AG04450 (cell line): ENCODE measurements at regions of chr1 and their contacts with region 1.

Region 1: DNA sequence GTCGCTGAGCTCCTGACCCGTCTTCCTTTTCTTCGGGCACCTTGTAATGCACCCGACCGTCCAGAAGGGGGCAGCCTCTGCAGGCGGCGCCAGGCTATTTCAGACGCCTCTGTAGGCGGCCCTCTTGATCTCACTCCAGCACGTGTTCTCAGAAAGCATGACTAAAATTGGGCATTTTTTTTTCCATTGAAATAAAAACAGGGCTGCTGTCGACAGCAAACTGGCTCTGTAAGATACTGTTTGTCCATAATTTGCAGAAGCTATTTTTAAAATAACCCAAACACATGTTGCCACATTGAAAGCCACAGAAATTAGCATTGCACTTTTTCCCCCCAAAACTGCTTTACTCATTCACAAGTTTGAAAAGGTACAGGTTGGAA is 78.0 kb downstream of the STUM start:
- DNase-seq: no peak
- H3K4me3 ChIP-seq: no peak overlapping the region
- H3K27ac ChIP-seq: no peak overlapping the region
- H3K27me3 ChIP-seq: peaks cover 9% of the 10 kb centered on the region
- CTCF ChIP-seq: peak; percentile 92

Region 2: GRCh38 chr1:226157761-226158316 is 468.7 kb before region 1 on chr1:
- CTCF ChIA-PET with region 1: no interaction called
- POLR2A ChIA-PET with region 1: no interaction called
- DNase-seq: no peak
- H3K4me3 ChIP-seq: no peak overlapping the region
- H3K27ac ChIP-seq: no peak overlapping the region
- H3K27me3 ChIP-seq: no peaks in the 10 kb centered on the region
- CTCF ChIP-seq: no peak

Region 3: DNA sequence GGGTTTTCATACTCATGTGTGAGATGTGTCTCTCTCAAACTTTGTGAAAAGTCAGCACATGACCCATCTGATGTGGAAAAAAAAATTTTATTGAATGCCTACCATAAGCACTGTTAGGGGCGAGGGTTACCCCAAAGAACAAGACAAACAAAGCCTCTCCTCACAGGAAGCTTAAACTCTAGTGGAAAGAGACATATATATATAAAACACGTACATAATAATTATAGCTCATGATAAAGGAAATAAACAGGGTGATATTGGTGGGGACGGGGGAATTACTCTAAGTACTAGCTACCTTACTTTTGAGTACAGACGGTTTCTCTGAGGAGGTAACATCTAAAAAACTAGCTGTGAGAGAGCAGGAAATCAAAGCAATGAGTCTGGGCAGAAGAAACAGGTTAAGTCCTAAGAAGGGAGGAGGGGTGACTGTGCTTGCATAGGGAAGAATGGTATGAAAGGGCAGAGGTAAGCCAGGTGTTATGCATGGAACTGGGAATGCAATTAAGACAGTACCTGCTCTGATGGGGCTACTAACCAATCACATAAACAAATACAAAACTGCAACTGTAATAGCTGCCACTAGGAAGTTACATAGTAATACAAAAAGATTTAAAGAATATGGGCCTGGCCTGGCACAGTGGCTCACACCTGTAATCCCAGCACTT is 322.1 kb before region 1 on chr1:
- CTCF ChIA-PET with region 1: no interaction called
- POLR2A ChIA-PET with region 1: no interaction called
- DNase-seq: no peak
- H3K4me3 ChIP-seq: no peak overlapping the region
- H3K27ac ChIP-seq: no peak overlapping the region
- H3K27me3 ChIP-seq: no peaks in the 10 kb centered on the region
- CTCF ChIP-seq: no peak

Region 4: GRCh38 chr1:226547754-226548191 is 78.8 kb before region 1 on chr1:
- CTCF ChIA-PET with region 1: interaction called, 13 read pairs
- POLR2A ChIA-PET with region 1: no interaction called
- DNase-seq: peak; percentile 67
- H3K4me3 ChIP-seq: no peak overlapping the region
- H3K27ac ChIP-seq: no peak overlapping the region
- H3K27me3 ChIP-seq: peaks cover 44% of the 10 kb centered on the region
- CTCF ChIP-seq: peak; percentile 100

Region 5: GRCh38 chr1:226642876-226643576 is 16.5 kb after region 1 on chr1:
- CTCF ChIA-PET with region 1: interaction called, 24 read pairs
- POLR2A ChIA-PET with region 1: no interaction called
- DNase-seq: peak; percentile 34
- H3K4me3 ChIP-seq: no peak overlapping the region
- H3K27ac ChIP-seq: peak overlapping the region; percentile 57
- H3K27me3 ChIP-seq: no peaks in the 10 kb centered on the region
- CTCF ChIP-seq: no peak

Region 6: DNA sequence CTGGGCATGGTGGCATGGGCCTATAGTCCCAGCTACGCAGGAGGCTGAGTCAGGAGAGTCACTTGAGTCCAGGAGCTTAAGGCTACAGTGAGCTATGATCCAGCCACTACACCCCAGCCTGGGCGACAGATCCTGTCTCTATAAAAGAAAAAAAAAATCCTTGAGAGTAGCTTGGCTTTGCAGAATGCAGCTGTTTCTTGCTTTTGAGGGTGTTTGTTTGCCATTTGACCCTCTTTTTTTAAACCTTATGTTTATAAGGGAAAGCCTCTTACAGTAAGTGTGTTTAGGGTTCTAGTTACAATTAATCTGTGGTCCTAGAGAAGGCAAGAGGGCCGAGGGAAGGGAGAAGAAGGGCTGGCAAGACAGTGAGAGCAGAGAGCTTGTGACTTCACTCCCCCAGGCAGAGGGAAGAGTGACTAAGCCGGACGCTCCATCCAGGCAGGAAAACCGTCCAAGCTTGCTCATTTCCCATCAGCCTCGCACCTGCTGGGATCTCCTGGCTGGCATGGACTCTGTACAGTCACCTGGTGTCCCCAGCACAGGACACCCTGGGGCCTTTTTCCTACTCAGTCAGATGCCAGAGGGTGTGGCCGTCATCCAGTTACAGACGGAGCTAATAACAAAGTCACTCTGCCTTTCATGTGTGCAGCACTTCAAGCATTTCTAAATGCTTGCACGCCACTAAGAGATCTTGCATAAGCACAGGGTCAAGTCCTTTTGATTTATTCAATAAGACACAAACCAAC is 188.4 kb after region 1 on chr1:
- CTCF ChIA-PET with region 1: interaction called, 12 read pairs
- POLR2A ChIA-PET with region 1: no interaction called
- DNase-seq: peak; percentile 63
- H3K4me3 ChIP-seq: no peak overlapping the region
- H3K27ac ChIP-seq: peak overlapping the region; percentile 86
- H3K27me3 ChIP-seq: peaks cover 3% of the 10 kb centered on the region
- CTCF ChIP-seq: no peak

Region 7: GRCh38 chr1:226827968-226828513 is 201.5 kb after region 1 on chr1:
- CTCF ChIA-PET with region 1: interaction called, 138 read pairs
- POLR2A ChIA-PET with region 1: no interaction called
- DNase-seq: peak; percentile 85
- H3K4me3 ChIP-seq: no peak overlapping the region
- H3K27ac ChIP-seq: no peak overlapping the region
- H3K27me3 ChIP-seq: peaks cover 3% of the 10 kb centered on the region
- CTCF ChIP-seq: peak; percentile 94